ENCODE measurements at regions of chr20 and their contacts with region 1.

Region 1: DNA sequence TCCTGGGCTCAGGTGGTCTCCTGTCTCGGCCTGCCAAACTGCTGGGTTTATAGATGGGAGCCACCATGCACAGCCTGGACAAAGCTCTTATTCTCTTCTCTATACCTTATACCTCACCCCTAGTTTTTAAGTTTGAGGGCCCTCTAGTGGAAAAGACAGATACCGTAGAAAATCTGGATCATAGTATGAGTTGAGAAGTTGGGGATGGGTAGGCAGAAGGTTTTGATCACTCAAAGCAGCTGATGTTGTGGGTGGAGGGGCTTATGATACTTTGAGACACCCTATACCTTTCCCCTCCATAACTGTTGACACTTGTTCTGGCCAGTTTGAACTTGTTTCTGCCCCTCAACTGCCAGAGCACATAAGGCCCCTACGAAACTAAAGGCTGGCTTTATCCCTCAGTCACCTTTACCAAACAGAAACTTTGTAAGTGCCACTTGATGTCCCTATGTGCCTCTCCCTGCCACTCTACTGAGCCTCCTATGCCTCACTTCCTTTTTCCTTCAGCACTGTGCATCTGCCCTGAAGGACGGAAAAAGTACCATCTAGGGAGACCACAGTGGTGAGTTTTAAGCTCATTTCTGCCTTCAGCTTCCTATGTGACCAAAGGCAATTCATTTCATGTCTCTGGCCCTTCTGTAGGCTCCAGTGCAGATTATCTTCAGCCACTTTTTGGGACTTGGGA is 28.6 kb downstream of the RALY start:
- DNase-seq: peak; percentile 69
- CTCF ChIP-seq: peak; percentile 53

Region 2: DNA sequence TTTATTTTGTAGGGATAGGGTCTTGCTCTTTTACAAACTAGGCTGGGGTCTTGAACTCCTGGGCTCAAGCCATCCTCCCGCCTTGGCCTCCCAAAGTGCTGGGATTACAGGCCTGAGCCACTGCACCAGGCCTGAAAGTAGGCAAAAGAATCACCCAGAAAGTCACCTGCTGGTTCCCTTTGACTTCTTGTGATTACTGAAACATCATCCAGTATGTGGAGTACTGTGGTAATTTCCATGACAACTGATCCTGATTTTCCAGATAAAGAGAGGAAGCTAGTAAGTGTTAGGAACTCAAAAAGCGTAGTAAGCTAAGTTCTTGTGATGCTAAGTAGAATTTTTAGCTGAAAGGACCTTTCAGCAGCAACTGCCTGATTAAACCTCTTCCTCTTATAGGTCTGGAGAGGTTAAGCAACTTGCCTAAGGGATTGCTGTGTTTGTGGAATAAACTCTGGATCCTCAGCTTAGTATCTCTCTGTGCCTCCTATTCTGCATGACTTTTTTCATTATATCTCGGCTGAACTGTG is 11.8 kb before region 1 on chr20:
- CTCF ChIA-PET with region 1: interaction called, 24 read pairs
- POLR2A ChIA-PET with region 1: no interaction called
- DNase-seq: no peak
- CTCF ChIP-seq: no peak

Measured in GM10248 (cell line).